Posterior vena cava (tissue), 2 donors: ENCODE measurements at regions of chr14 and their contacts with region 1.

Region 1: GRCh38 chr14:21498553-21499526 is 12.3 kb downstream of the METTL3 start:
- DNase-seq: no peak

Region 2: GRCh38 chr14:21476366-21476924 is 22.4 kb before region 1 on chr14:
- intact Hi-C with region 1: no loop called
- DNase-seq: peak; percentile 94

Region 3: DNA sequence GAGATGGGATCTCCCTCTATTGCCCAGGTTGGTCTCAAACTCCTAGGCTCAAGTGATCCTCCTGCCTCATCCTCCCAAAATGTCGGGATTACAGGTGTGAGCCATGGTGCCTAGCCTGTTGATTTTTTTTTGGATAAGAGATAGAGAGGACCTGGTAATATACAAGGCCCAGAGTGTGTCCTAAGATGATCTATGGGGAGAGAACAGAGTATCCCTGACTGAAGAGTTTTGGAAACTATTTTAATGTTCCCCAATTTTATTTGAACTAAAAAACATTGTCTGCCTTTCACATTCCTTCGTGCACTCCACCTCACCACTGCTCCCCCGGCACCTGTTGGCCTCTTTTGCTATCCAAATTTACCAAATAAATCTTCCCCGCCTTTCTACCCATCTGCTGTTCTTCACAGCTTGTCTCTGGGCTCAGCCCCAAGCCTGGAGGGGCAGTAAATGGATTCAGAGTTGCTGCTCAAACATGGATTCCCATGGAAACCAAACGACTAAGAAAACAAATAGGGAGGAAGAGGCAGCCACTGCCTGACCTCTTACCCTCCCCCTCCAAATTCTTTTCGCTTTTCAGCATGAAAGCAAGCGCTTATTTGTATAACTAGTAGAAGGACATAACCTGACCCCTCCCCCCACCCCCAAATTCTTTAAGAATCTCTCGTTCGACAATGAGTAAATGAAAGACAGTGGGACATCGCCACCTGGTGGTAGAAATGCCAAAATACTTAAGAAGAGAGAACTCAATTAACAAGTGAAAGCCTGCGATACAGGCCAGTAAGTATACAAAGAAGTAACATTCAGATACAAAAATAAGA is 58.5 kb after region 1 on chr14:
- intact Hi-C with region 1: loop called in 1 of 2 experiments (anchors 5 kb)
- DNase-seq: no peak